K562 (cell line): ENCODE measurements at regions of chr3 and their contacts with region 1.

Region 1: DNA sequence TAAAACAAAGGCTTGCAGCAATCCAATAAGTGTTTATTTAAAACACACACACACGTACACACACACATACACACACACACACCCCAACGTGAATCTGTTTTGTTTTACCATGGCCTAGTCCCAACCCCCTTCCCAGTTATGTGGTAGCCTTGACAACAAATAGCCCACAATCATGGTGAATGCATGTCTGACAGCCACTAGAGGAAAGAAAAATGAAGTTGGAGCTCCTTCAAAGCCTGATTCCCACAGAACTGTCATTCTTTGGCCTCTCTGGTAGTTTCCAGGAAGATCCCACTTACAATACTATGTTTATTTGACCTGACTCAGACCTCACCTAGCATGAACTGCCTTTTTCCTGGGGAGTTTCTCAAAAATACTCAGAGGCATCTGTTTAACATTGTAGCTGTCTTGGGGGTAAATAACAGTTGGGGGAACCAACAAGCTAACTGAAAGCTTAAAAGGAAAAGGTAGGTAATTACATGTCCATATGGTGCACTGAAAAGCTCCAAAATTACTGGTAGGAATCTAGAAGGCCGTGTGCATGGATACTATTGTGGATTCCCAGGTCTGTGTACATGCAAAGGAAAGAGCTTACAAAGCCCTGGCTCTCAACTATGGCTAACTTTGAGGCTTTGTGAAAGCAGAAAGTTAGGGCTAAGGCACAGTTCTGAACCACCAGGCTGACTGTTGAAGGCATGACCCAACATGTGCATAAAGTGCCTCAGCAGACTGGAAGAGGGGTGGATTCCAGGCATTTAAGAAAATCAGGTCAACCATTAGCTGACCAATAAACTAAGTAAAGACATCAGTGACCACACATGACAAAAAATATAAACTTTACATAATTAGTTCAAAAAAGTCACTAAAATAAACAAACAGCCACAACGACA is 65.3 kb downstream of the FAIM start:
- DNase-seq: peak in 1 of 4 experiments; percentile 18
- ATAC-seq: peak; percentile 71
- H3K4me3 ChIP-seq: no peak overlapping the region
- H3K27ac ChIP-seq: peak overlapping the region; percentile 47; the same call in 2 of the 3 replicates
- H3K4me1 ChIP-seq: peaks cover 0 to 7% of the 10 kb centered on the region in 2 experiments; a peak in 1 of 5 replicates
- H3K27me3 ChIP-seq: no peaks in the 10 kb centered on the region
- CTCF ChIP-seq: no peak
- EP300 ChIP-seq: no peak
- POLR2A ChIP-seq: no peak
- RAD21 ChIP-seq: no peak

Region 2: DNA sequence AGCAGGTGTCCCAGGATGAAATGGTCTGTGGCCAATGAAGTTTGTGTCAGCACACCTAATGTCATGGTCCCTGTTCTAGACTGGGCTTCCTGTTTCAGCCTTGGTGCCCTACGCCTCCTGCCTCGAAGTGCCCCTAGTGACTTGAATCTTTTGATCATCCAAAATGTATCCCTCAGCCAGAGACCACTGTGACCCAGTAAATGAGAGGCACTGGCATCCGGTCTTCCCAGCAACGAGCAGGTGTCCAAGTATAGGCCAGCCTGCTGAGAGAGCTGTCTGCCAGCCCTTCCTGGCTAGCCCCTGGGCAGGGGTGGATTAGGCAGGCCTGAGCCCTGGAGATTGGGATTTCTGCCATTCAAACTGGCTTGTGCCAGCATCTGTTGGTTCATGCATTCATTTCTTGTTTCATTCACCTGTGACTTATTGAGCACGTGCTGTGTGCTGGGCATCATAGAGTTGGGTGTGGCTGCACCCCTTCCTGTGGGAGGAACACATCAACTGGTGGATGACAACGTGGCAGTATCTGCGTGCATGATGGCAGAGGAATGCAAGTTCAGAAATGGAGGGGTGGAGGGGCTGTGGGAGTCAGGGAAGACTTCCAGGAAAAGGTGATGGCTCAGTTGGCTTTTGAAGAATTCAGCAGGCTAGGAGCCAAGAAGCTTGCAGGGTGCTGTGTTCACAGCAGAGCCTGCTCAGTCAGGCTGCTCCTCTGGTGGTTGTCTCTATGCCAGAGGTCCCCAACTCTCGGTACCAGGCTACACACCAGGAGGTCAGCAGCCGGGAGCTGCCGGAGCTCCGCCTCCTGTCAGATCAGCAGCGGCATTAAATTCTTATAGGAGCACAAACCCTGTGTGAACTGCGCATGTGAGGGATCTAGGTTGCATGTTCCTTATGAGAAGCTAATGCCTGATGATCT is 217.8 kb before region 1 on chr3:
- CTCF ChIA-PET with region 1: no interaction called
- POLR2A ChIA-PET with region 1: no interaction called
- in situ Hi-C with region 1: no loop called
- intact Hi-C with region 1: no loop called
- DNase-seq: no peak
- ATAC-seq: no peak
- H3K4me3 ChIP-seq: no peak overlapping the region
- H3K27ac ChIP-seq: no peak overlapping the region
- H3K4me1 ChIP-seq: peaks cover 0 to 10% of the 10 kb centered on the region in 2 experiments; a peak in 2 of 5 replicates
- H3K27me3 ChIP-seq: peaks cover 6 to 47% of the 10 kb centered on the region in 2 experiments; a peak in 3 of 5 replicates
- CTCF ChIP-seq: no peak
- EP300 ChIP-seq: no peak
- POLR2A ChIP-seq: no peak
- RAD21 ChIP-seq: no peak

Region 3: DNA sequence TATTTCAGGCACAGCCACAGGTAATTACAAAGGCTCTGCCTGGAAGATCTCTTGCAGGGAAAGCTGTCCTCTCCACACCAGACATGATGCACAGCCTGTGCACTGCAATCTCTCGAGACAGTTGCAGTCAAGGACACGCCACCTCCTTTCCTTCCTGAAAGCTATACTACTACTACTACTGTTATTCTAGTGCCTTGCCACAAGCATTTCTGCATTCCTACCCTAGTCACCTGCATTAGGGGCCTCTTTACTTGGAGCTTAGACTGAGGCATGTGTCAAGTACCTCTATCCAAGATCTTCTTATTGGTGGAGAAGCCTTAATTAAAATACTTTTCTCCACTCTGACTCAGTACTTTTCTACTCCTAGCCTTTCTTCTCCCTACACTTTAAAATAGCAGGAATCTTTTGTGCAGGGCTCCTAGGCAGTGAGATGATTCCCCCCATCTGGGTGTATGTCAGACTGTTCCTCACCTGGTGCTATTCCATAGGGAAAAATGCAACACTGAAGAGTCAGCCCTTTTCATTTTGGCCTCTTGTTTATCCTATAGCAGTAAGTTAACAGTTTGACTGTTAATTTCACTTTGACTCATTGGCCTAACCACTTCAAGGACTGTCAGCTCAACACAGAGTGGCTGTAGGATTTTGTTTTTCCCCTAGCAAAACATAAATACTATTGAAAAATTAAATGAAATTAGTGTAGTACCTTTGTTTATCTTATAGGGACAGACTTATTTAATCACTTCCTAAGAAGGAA is 160.6 kb before region 1 on chr3:
- CTCF ChIA-PET with region 1: no interaction called
- POLR2A ChIA-PET with region 1: no interaction called
- in situ Hi-C with region 1: no loop called
- intact Hi-C with region 1: no loop called
- DNase-seq: no peak
- ATAC-seq: no peak
- H3K4me3 ChIP-seq: no peak overlapping the region
- H3K27ac ChIP-seq: no peak overlapping the region
- H3K4me1 ChIP-seq: no peaks in the 10 kb centered on the region
- H3K27me3 ChIP-seq: no peaks in the 10 kb centered on the region
- CTCF ChIP-seq: no peak
- EP300 ChIP-seq: no peak
- POLR2A ChIP-seq: no peak
- RAD21 ChIP-seq: no peak

Region 4: DNA sequence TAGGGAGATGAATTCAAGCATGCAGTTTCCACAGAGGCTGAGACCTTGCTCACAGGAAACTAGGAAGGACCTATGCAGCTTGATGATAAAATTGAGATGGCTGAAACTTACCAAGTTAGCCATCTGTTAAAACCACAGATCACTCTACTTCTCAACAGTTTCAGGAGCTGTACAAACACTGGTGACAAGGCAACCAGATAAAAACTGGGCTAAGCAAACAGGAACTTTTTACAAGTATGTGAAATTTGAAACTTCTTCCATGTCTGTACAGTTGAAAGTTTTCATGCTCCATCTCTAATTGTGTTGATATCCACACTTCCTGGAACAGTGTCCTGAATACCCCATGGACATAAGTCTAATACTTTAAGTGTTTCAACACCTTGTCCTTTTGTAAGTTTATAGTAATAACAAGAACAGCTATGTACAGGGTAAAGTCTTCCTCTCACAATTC is 12.9 kb after region 1 on chr3:
- CTCF ChIA-PET with region 1: no interaction called
- POLR2A ChIA-PET with region 1: interaction called, 11 read pairs
- in situ Hi-C with region 1: no loop called
- intact Hi-C with region 1: no loop called
- DNase-seq: peak in 2 of 4 experiments; percentile 58 to 82
- ATAC-seq: peak; percentile 86
- H3K4me3 ChIP-seq: no peak overlapping the region
- H3K27ac ChIP-seq: peak overlapping the region; percentile 71
- H3K4me1 ChIP-seq: peaks cover 6 to 31% of the 10 kb centered on the region in 2 experiments; a peak in 4 of 5 replicates
- H3K27me3 ChIP-seq: no peaks in the 10 kb centered on the region
- CTCF ChIP-seq: no peak
- EP300 ChIP-seq: peak; percentile 90
- POLR2A ChIP-seq: no peak
- RAD21 ChIP-seq: no peak; a peak in 1 of 4 replicates